Psoas muscle (tissue), 8 donors: ENCODE measurements at regions of chr2 and their contacts with region 1.

Region 1: GRCh38 chr2:60998628-60999545 is 18.6 kb upstream of the PEX13 start:
- DNase-seq: no peak
- ATAC-seq: peak in 3 of 4 donors; percentile 53 to 70 (median 59)
- H3K4me3 ChIP-seq: no peak overlapping the region
- H3K27ac ChIP-seq: no peak overlapping the region
- H3K4me1 ChIP-seq: peaks cover 3% of the 10 kb centered on the region
- H3K27me3 ChIP-seq: no peaks in the 10 kb centered on the region
- CTCF ChIP-seq: peak; percentile 64

Region 2: DNA sequence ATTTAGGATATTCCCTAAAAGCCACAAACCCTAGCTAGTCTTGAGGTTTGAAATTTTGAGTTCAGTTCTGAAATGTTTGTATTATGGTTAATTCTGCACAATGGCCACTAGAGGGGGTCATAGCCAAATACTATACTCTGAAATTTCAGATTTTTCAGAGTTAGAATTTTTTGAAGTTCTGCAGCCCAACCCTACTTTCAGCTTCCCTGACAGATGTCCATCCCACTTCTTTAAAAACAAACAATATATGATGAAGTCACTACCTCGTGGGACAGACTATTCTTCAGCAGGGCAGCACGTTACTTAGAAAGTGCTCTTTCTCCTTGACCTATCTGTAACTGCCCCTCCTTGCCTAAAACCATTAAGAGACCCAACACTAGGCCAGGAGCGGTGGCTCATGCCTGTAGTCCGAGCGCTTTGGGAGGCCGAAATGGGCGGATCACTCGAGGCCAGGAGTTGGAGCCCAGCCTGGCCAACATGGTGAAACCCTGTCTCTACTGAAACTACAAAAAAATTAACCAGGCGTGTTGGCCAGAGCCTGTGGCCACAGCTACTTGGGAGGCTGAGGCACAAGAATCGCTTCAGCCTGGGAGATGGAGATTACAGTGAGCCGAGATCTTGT is 291.0 kb before region 1 on chr2:
- intact Hi-C with region 1: loop called (anchors 2 kb)
- DNase-seq: no peak
- ATAC-seq: peak in 2 of 4 donors; percentile 43 to 47
- H3K4me3 ChIP-seq: no peak overlapping the region
- H3K27ac ChIP-seq: no peak overlapping the region
- H3K4me1 ChIP-seq: no peaks in the 10 kb centered on the region
- H3K27me3 ChIP-seq: no peaks in the 10 kb centered on the region
- CTCF ChIP-seq: peak; percentile 74

Region 3: DNA sequence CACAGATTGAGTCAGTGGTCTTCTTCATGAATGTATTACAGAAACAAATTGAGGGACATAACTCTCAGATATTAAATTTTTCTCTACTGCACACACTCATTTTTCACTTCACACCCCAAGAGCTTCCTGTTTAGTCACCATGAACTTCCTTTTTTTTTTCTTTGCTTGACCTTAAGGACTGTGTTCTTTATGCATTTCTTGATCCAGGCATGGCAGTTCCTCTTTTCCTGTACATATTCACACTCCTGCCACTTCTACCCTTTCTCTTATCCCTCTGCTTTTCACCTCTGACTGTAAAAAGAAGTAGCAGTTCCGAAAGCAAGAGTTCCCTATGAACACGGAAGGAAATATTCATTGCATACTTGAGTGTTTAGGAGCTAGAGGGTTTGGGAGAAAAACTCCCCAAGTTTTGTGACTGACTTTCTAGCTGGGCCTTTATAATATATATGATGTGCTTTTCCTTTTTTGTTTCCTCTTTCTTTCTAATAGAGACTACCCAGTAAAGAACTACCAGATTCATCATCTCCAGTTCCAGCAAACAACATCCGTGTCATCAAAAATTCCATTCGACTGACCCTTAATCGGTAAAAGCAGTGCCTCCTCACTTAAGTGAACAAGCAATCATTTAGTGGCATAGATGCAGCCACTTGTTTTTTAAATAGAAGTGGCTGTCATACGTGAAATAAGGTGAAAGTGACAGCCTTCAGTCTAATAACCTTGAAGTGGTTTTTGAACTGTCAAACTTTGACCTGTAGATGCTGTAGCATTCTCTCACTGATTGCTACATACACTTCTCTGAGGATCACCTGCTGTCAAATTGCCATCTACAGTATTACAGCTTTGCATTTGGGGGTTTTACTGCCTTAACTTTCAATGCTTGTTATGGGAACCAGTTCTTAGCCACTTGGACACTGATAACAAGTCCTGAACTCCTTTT is 202.0 kb before region 1 on chr2:
- intact Hi-C with region 1: loop called (anchors 2 to 5 kb)
- DNase-seq: no peak
- ATAC-seq: no peak
- H3K4me3 ChIP-seq: no peak overlapping the region
- H3K27ac ChIP-seq: no peak overlapping the region
- H3K4me1 ChIP-seq: no peaks in the 10 kb centered on the region
- H3K27me3 ChIP-seq: no peaks in the 10 kb centered on the region
- CTCF ChIP-seq: no peak

Region 4: DNA sequence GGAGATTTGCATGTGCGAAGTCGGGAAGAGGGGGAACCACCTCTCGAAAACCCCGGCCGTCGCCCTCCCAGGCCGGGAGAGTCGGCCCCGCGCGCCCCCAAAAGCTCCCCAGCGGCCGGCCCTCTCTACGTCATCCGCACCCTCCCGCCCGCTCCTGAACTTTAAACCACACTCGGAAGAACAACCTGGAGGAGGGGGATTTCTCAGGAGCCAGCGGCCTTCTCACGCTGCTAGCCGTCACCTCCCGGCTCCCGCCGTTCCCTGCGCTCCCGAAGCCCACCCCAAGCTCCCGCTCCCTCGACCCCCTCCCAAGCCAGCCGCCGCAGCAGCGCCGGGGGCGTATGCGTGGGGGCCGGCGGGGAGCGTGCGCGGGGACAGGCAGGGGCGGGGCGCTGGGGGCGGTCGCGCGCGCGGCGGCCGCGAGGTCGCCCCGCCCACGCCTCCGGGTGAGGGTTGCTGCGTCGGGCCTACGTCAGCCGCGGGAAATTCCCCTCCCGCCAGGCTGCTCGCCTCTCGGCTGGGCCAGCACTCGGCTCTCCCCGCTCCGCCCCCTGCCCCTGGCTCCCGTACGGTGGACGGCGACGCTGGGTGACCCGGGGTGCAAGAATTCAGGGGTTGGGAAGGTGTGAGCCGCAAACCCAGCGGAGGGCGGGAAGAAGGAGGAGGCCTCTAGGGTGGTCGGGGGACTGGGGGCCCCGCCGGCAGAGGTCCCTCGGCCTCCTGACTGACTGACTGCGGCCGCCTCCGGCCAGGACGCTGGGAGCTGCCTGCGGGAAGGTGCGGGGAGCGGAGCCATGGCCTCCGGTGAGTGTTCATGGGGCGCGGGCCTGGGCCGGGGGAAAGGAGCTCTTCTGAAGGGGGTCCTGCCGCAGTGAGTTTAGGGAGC is 117.6 kb before region 1 on chr2 and contains the start of gene REL:
- intact Hi-C with region 1: loop called in 1 of 2 experiments (anchors 5 kb)
- DNase-seq: peak; percentile 91 to 95
- ATAC-seq: peak; percentile 94 to 98 (median 97)
- H3K4me3 ChIP-seq: peak within 1 kb of the TSS; percentile 85
- H3K27ac ChIP-seq: peak within 1 kb of the TSS; percentile 94
- H3K4me1 ChIP-seq: peaks cover 21% of the 10 kb centered on the region
- H3K27me3 ChIP-seq: no peaks in the 10 kb centered on the region
- CTCF ChIP-seq: peak; percentile 3
- total RNA-seq, gene REL: 4.0 to 6.9 (median 4.7) TPM